ENCODE measurements at regions of chr4 and their contacts with region 1.

Region 1: GRCh38 chr4:174282836-174283506 is 496 bp downstream of the FBXO8 start:
- DNase-seq: peak; percentile 79
- H3K4me3 Mint-ChIP-seq: peak overlapping the region; percentile 98
- H3K27ac Mint-ChIP-seq: peak overlapping the region; percentile 99
- H3K4me1 Mint-ChIP-seq: peaks cover 52% of the 10 kb centered on the region
- H3K27me3 Mint-ChIP-seq: no peaks in the 10 kb centered on the region

Region 2: GRCh38 chr4:174318829-174319764 is 36.1 kb after region 1 on chr4:
- intact Hi-C with region 1: loop called (anchors 2 kb)
- DNase-seq: no peak
- H3K4me3 Mint-ChIP-seq: no peak overlapping the region
- H3K27ac Mint-ChIP-seq: no peak overlapping the region
- H3K4me1 Mint-ChIP-seq: no peaks in the 10 kb centered on the region
- H3K27me3 Mint-ChIP-seq: no peaks in the 10 kb centered on the region

Region 3: DNA sequence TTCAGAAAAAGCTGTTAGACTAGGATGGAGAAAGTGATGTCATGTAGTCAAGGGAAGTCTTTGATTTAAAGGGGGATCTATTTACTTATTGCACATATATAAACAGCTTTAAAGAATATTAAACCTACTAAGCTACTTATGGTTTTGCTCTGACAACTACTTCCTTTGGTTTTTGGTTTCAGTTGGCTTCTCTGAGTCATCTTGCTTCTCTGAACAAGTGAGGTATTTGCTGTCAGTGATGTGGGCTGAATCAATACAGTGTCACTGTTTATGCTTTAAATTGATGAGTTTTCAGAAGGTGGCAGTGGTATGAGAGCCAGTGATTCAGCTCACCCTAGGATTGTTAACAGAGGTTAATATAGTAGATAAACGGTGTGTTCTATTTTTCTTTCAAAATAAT is 75.9 kb after region 1 on chr4:
- intact Hi-C with region 1: loop called (anchors 1 kb)
- DNase-seq: no peak
- H3K4me3 Mint-ChIP-seq: no peak overlapping the region
- H3K27ac Mint-ChIP-seq: no peak overlapping the region
- H3K4me1 Mint-ChIP-seq: peaks cover 15% of the 10 kb centered on the region
- H3K27me3 Mint-ChIP-seq: peaks cover 32% of the 10 kb centered on the region

Region 4: DNA sequence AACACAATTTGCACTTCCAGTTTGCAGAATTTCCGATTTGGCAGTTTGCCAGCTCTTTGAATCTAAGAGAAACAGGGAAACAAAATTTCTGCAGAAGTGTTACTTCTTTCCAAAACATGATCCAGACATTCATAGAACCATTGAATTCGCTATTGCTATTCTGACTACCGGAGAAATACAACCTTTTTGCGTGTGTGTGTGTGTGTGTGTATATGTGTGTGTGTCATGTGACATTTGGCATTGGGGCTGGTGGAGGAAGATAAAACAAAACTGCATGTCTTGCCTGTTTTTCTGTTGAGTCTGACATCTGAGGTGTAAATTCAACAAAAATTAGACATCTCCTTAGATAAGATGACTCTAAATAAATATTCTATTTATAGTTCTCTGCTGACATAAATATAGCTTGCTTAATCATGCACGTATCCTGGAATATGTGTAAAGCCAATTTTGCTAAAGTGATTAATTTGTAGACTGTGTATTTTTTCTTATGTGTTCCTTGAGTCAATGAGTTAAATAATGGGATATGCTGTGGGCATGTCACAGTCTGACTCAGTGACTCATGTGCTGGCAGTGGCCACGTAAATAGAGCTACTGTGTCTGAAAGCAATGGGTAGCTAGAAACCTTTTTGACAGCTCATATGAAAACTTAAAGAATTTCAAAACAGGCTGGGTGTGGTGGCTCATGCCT is 140.4 kb after region 1 on chr4:
- intact Hi-C with region 1: no loop called
- DNase-seq: no peak
- H3K4me3 Mint-ChIP-seq: no peak overlapping the region
- H3K27ac Mint-ChIP-seq: no peak overlapping the region
- H3K4me1 Mint-ChIP-seq: peaks cover 16% of the 10 kb centered on the region
- H3K27me3 Mint-ChIP-seq: no peaks in the 10 kb centered on the region

Region 5: GRCh38 chr4:174631901-174632758 is 349.2 kb after region 1 on chr4:
- intact Hi-C with region 1: no loop called
- DNase-seq: no peak
- H3K4me3 Mint-ChIP-seq: no peak overlapping the region
- H3K27ac Mint-ChIP-seq: no peak overlapping the region
- H3K4me1 Mint-ChIP-seq: peaks cover 5% of the 10 kb centered on the region
- H3K27me3 Mint-ChIP-seq: no peaks in the 10 kb centered on the region